OCI-LY7 (cell line): ENCODE measurements at regions of chr20 and their contacts with region 1.

Region 1: DNA sequence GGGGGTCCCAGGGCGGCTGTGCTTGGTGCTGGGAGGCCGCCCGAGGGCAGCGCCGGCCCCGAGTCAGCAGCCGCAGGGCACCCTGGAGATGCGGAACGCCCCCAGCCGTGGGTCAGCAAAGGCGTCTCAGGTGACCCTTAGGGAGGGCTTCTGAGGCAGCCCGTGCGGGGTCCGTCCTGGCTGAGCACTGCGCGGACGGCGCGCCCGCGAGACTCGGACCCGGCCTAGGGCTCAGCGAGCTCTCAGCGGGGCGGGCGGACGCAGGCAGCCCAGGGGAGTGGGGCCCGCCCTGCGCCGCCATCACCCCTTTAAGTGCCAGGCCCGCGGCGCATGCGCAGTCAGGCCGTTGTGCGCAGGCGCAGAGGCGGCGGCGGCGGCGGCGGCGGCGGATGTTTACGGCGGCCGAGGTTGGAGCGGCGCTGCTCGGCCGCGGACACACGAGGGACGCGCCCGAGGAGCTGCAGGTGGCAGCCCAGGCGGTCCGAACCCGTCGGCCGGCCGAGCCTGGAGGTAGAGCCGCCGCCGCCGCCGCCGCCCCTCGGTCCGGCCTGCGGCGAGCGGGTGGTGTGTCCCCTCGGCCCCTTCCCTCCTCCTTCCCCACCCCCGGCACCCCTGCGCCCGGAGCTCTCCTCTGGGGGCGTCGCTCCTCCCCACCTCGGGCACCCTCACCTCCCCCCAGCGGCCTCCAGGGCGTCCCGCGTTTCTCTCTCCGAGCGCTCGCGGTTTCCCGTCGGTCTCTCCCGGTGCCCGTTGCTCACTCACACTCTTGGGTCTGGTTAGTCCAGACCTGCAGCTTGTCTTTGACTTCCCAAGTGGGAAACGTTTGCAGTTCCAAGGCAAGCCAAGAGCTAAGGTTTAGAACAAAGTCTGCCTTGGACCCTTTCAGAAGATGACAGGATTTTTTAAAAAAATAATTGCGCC is at the start of gene PCMTD2:
- DNase-seq: peak; percentile 93
- H3K4me3 ChIP-seq: peak within 1 kb of the TSS; percentile 95
- H3K27ac ChIP-seq: peak within 1 kb of the TSS; percentile 57
- H3K4me1 ChIP-seq: peaks cover 28% of the 10 kb centered on the region
- CTCF ChIP-seq: peak; percentile 37; the same call in 1 of the 2 replicates
- total RNA-seq, gene PCMTD2: 47.0 and 62.1 TPM in 2 replicates

Region 2: GRCh38 chr20:62578294-62578897 is 1677.2 kb before region 1 on chr20:
- CTCF ChIA-PET with region 1: interaction called, 11 read pairs
- POLR2A ChIA-PET with region 1: no interaction called
- intact Hi-C with region 1: no loop called
- DNase-seq: peak; percentile 23
- H3K4me3 ChIP-seq: no peak overlapping the region
- H3K27ac ChIP-seq: no peak overlapping the region
- H3K4me1 ChIP-seq: no peaks in the 10 kb centered on the region
- CTCF ChIP-seq: peak; percentile 40; the same call in 1 of the 2 replicates